ENCODE measurements at regions of chr2 and their contacts with region 1.

Region 1: DNA sequence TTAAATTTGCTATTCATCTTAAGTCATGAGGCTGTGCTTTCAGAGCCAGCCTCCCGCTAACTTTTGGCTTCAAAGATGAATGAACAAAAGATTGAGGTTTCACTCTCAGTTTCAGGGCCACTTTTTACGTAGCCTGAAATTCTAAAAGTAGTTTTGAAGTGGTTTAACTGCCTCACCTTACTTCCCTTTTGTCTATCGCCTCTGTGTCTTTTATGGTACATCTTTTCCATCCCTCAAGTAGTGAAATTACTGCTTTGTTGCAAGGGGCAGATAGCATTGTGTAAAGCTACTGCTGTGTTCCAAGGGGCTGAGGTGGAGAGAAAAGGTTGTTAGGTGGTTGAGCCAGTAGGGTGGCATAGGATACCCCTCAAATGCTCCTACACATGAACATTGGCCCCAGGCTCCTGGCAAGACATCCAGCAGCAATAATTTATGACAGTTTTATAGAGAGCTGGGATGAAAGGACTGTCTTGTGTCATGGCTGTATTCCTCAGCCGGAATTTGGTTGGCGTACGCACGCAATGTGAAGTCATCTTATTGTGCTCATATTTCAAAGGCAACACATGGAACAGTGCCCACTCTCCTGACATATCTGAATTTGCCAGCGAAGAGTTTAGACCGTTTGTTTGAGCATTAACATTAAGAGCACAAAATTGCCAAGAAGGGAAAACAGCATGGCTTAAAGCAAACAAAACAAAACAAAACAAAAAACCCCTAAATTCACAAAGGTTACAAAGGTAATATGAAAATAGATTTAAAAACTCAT is 32.2 kb downstream of the QPCT start:
- DNase-seq: peak; percentile 81
- ATAC-seq: peak; percentile 74
- H3K4me3 ChIP-seq: peak overlapping the region in 4 of 5 experiments; percentile 5 to 36 (median 30)
- H3K4me3 Mint-ChIP-seq: peak overlapping the region; percentile 83
- H3K27ac ChIP-seq: peak overlapping the region; percentile 72 to 74
- H3K27ac Mint-ChIP-seq: peak overlapping the region; percentile 90
- H3K4me1 ChIP-seq: peaks cover 42 to 45% of the 10 kb centered on the region in 2 donors
- H3K4me1 Mint-ChIP-seq: peaks cover 43% of the 10 kb centered on the region
- H3K27me3 ChIP-seq: no peaks in the 10 kb centered on the region
- H3K27me3 Mint-ChIP-seq: no peaks in the 10 kb centered on the region
- CTCF ChIP-seq: no peak

Region 2: DNA sequence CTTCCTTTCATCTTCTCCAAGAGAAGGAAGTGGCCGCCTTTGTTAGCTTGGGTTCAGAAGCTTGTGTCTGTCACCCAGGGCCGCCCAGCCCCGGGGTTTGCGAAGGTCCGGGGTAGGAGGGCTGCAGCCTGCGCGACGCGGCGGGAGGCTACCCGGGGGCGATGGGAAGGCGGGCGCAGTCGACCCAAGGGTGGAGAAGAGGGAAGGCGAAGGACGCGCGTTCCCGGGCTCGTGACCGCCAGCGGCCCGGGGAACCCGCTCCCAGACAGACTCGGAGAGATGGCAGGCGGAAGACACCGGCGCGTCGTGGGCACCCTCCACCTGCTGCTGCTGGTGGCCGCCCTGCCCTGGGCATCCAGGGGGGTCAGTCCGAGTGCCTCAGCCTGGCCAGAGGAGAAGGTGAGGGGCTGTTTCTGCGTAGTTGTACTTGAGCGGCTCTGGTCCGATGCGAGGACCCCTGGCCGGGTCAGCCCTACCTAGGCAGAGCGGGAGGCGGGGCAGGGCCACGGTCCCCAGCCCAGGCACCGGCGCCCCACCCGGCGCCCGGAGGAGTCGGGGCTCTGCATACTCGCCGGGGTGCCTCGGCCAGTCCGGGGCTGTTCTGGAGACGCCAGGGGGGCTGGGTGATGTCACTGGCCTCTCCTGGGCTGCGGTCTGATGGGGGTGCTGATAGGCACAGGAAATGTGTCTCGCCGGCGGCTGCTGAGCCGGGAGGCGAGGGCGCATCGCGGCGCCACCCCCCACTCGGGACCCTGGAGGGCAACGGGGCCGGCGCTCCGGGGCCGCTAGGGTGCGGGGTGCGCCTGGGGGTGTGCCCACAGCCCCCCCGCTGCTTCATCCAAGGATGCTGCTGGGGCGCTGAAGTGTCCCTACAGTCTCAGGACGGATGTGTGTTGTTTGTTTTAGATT is 31.9 kb before region 1 on chr2 and contains the start of gene QPCT:
- CTCF ChIA-PET with region 1: interaction called, 3 read pairs
- POLR2A ChIA-PET with region 1: no interaction called
- intact Hi-C with region 1: loop called (anchors 5 kb)
- DNase-seq: peak; percentile 79
- ATAC-seq: peak; percentile 78
- H3K4me3 ChIP-seq: peak within 1 kb of the TSS; percentile 50 to 79 (median 66)
- H3K4me3 Mint-ChIP-seq: peak within 1 kb of the TSS; percentile 91
- H3K27ac ChIP-seq: peak within 1 kb of the TSS in 1 of 2 donors; percentile 58
- H3K27ac Mint-ChIP-seq: peak within 1 kb of the TSS; percentile 80
- H3K4me1 ChIP-seq: peaks cover 23 to 25% of the 10 kb centered on the region in 2 donors
- H3K4me1 Mint-ChIP-seq: peaks cover 30% of the 10 kb centered on the region
- H3K27me3 ChIP-seq: peaks cover 0 to 4% (median 2%) of the 10 kb centered on the region in 4 experiments
- H3K27me3 Mint-ChIP-seq: peaks cover 5% of the 10 kb centered on the region
- CTCF ChIP-seq: peak; percentile 27
- total RNA-seq, gene QPCT: 2.1 and 2.6 TPM in 2 replicates

Region 3: DNA sequence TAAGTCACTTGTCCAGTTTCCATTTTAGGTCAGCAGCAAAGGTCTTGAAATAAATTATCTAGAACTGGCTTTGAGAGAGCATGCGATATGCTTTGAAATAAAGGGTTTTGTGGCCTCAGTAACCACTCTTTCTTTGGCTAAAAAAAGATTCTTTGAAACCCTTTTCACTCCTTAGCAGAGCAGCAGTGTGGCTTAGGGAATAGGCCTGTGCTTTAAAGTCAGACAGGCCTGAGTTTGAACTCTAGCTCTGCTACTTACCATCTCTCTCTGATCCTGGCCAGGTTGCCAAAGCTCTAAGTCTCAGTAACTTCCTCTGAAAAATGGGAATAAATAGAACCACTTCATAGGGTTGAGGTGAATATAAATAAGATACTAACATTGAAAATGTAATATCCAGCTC is 20.6 kb after region 1 on chr2:
- CTCF ChIA-PET with region 1: interaction called, 13 read pairs
- POLR2A ChIA-PET with region 1: no interaction called
- intact Hi-C with region 1: no loop called
- DNase-seq: no peak
- ATAC-seq: no peak
- H3K4me3 ChIP-seq: no peak overlapping the region
- H3K4me3 Mint-ChIP-seq: no peak overlapping the region
- H3K27ac ChIP-seq: no peak overlapping the region
- H3K27ac Mint-ChIP-seq: no peak overlapping the region
- H3K4me1 ChIP-seq: no peaks in the 10 kb centered on the region
- H3K4me1 Mint-ChIP-seq: peaks cover 4% of the 10 kb centered on the region
- H3K27me3 ChIP-seq: no peaks in the 10 kb centered on the region
- H3K27me3 Mint-ChIP-seq: no peaks in the 10 kb centered on the region
- CTCF ChIP-seq: no peak

Region 4: GRCh38 chr2:37947306-37947705 is 570.7 kb after region 1 on chr2:
- CTCF ChIA-PET with region 1: no interaction called
- POLR2A ChIA-PET with region 1: no interaction called
- intact Hi-C with region 1: no loop called
- DNase-seq: no peak
- ATAC-seq: no peak
- H3K4me3 ChIP-seq: no peak overlapping the region
- H3K4me3 Mint-ChIP-seq: no peak overlapping the region
- H3K27ac ChIP-seq: no peak overlapping the region
- H3K27ac Mint-ChIP-seq: no peak overlapping the region
- H3K4me1 ChIP-seq: no peaks in the 10 kb centered on the region
- H3K4me1 Mint-ChIP-seq: no peaks in the 10 kb centered on the region
- H3K27me3 ChIP-seq: no peaks in the 10 kb centered on the region
- H3K27me3 Mint-ChIP-seq: no peaks in the 10 kb centered on the region
- CTCF ChIP-seq: no peak